Esophagus muscularis mucosa (tissue), 4 donors: ENCODE measurements at regions of chr6 and their contacts with region 1.

Region 1: GRCh38 chr6:3742426-3743344 is 8.8 kb downstream of the PXDC1 start:
- DNase-seq: peak; percentile 97
- H3K4me3 ChIP-seq: peak overlapping the region; percentile 11 to 40 (median 30)
- H3K27ac ChIP-seq: peak overlapping the region; percentile 87 to 99 (median 99)
- H3K4me1 ChIP-seq: peaks cover 78 to 100% (median 99%) of the 10 kb centered on the region in 4 donors
- H3K27me3 ChIP-seq: no peaks in the 10 kb centered on the region
- CTCF ChIP-seq: peak; percentile 92 to 99 (median 94)
- EP300 ChIP-seq: peak; percentile 42
- POLR2A ChIP-seq: no peak

Region 2: DNA sequence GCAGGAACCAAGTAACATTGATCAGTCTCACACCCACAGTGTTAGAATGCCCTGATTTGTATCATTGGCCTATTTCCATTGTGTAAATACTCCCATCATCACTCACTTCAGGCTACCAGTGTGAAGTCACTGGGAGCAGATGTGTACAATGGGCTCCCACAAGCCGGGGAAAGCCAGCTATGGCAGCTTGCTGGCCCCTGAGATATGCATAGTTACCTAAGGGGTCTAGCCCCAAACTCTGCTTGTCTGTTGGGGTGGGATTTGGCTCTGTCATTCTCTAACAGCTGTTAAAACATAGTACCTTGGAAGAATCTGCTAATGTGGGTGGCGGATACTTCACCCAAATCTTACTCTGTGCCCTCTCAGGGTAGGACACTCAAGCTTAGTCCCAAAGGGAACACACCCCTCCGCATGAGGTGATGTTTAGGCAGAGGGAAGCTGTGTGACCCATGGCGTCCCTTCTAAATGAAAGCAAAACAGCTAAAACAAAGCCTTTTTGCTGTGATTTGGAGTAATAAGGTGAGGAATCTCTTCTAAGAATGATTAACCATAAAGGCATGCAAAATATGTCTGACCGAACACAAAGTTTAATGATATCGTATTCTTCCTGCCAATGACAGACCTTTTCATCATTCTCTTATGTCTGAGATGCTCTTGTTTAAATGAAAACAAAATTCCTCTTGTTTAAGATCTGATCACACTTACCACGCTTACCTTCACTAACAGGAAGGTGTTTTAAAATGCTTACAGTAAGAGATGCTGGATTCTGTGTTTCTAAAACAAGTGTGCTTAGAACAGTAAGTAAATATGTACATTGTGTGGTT is 54.8 kb after region 1 on chr6:
- intact Hi-C with region 1: no loop called
- DNase-seq: no peak
- H3K4me3 ChIP-seq: no peak overlapping the region
- H3K27ac ChIP-seq: peak overlapping the region in 1 of 4 donors; percentile 13
- H3K4me1 ChIP-seq: peaks cover 29 to 43% (median 39%) of the 10 kb centered on the region in 4 donors
- H3K27me3 ChIP-seq: no peaks in the 10 kb centered on the region
- CTCF ChIP-seq: no peak
- EP300 ChIP-seq: no peak
- POLR2A ChIP-seq: no peak

Region 3: DNA sequence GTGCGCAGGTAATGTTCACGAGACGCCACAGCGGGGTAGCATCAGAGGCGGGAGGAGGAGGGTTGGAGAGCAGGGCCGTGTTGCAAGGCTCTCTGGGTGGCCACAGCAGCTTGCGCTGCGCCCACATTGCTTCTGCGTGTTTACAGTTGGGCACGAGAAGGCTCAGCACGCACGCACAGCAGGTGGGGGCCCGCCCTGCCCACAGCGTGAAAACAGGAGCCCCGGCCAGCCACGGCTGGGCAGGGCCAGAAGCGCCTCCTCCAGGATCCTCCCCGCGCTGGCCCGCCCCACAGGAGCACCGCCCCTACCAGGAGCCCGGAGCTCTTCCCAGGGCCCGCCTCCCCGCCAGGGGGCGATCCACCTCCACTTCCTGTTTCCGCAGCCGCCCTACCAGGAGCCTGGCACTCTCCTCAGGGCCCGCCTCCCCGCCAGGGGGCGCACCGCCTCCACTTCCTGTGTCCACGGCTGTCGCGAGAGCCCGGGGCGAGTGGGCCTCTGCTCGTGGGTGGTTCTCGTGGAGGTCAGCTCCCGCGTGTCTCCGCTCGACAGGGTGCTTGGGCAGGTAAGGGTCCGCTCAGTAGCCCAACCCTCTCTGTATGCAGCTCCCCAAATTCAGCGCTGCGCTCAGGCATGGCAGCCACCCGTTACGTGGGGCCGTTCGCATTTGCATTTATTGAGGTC is 106.4 kb after region 1 on chr6 and contains the start of gene FAM50B:
- intact Hi-C with region 1: loop called (anchors 5 kb)
- DNase-seq: peak; percentile 97
- H3K4me3 ChIP-seq: peak within 1 kb of the TSS; percentile 55 to 64 (median 56)
- H3K27ac ChIP-seq: peak within 1 kb of the TSS; percentile 70 to 83 (median 74)
- H3K4me1 ChIP-seq: peaks cover 0 to 24% (median 22%) of the 10 kb centered on the region in 4 donors
- H3K27me3 ChIP-seq: no peaks in the 10 kb centered on the region
- CTCF ChIP-seq: peak; percentile 94 to 97 (median 97)
- EP300 ChIP-seq: no peak
- POLR2A ChIP-seq: no peak
- total RNA-seq, gene FAM50B: 12.5 to 26.6 (median 17.6) TPM

Region 4: DNA sequence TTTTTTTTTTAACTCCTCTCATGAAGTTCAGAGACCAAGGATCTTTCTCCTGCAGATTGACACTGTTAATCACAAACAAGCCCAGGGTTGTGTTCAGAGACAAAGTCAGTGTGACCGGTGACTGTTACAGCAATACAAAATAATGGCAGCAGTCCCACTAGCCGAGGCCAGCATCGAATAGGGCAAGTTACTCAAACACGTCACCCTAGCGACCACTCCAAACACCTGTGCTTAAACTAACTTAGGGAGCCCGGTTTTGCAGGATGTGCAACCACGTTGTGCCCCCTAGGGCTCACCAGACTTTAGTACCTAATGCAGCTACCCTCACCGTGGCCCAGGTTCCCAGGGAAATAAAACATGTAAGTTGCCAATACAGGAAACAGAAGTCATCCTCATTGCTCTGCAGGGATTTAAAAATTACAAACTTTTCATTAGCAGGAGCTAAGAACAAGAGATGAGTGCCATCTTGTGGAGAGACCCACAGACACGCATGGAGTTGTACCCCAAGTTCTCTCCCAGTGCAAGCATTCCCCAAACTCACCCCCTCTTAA is 144.5 kb after region 1 on chr6:
- intact Hi-C with region 1: loop called (anchors 5 kb)
- DNase-seq: no peak
- H3K4me3 ChIP-seq: no peak overlapping the region
- H3K27ac ChIP-seq: no peak overlapping the region
- H3K4me1 ChIP-seq: peaks cover 23 to 50% (median 33%) of the 10 kb centered on the region in 4 donors
- H3K27me3 ChIP-seq: no peaks in the 10 kb centered on the region
- CTCF ChIP-seq: peak; percentile 46 to 59 (median 48)
- EP300 ChIP-seq: no peak
- POLR2A ChIP-seq: no peak

Region 5: GRCh38 chr6:3898265-3898994 is 155.7 kb after region 1 on chr6:
- intact Hi-C with region 1: no loop called
- DNase-seq: no peak
- H3K4me3 ChIP-seq: no peak overlapping the region
- H3K27ac ChIP-seq: no peak overlapping the region
- H3K4me1 ChIP-seq: no peaks in the 10 kb centered on the region
- H3K27me3 ChIP-seq: no peaks in the 10 kb centered on the region
- CTCF ChIP-seq: no peak
- EP300 ChIP-seq: no peak
- POLR2A ChIP-seq: no peak

Region 6: GRCh38 chr6:3929281-3929798 is 186.7 kb after region 1 on chr6:
- intact Hi-C with region 1: loop called (anchors 1 kb)
- DNase-seq: peak; percentile 92
- H3K4me3 ChIP-seq: no peak overlapping the region
- H3K27ac ChIP-seq: peak overlapping the region; percentile 63 to 78 (median 74)
- H3K4me1 ChIP-seq: peaks cover 8 to 52% (median 39%) of the 10 kb centered on the region in 4 donors
- H3K27me3 ChIP-seq: no peaks in the 10 kb centered on the region
- CTCF ChIP-seq: no peak
- EP300 ChIP-seq: no peak
- POLR2A ChIP-seq: no peak

Region 7: GRCh38 chr6:3990692-3991501 is 248.2 kb after region 1 on chr6:
- intact Hi-C with region 1: loop called (anchors 2 kb)
- DNase-seq: peak; percentile 96
- H3K4me3 ChIP-seq: peak overlapping the region; percentile 46 to 58 (median 52)
- H3K27ac ChIP-seq: peak overlapping the region; percentile 72 to 80 (median 78)
- H3K4me1 ChIP-seq: peaks cover 9 to 21% (median 18%) of the 10 kb centered on the region in 4 donors
- H3K27me3 ChIP-seq: no peaks in the 10 kb centered on the region
- CTCF ChIP-seq: peak; percentile 80 to 83 (median 81)
- EP300 ChIP-seq: no peak
- POLR2A ChIP-seq: no peak

Region 8: DNA sequence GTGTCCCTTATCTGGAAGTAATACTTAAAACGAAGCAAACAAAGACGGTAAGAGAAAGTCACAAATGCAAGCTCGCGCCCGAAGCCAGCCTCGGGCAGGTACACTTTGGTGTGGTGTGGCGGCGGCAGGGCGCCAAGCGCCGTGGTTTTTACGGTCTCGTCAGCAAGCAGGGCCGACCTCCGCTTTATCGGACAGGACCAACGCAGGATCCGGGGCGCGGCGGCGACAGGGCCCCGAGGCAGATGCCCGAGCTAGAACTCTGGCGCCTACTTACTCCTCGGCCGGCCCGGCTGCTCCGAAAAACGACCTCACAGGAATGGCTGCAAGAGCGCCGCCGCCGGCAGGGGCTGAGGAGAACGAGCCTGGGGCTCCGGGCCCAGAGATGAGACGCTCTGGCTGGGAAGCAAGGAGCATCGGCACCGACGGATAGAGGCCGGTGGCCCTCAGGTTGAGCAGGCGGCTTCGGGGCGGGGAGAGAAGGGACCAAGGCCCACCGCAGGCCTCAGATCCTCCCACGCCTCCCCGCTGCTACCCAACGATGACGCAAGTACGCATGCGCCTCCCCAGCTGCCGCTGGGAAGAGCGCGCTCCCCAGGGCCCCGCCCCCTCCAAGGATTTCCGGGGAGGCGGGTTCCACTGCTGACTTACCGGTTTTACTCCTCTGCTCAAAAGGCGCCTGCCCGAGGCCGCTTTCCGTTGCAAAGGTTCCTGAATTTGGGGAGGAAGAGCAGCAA is 275.7 kb after region 1 on chr6:
- intact Hi-C with region 1: no loop called
- DNase-seq: peak; percentile 98
- H3K4me3 ChIP-seq: peak overlapping the region; percentile 66 to 76 (median 68)
- H3K27ac ChIP-seq: peak overlapping the region; percentile 94 to 98 (median 95)
- H3K4me1 ChIP-seq: peaks cover 47 to 63% (median 59%) of the 10 kb centered on the region in 4 donors
- H3K27me3 ChIP-seq: peaks cover 0 to 3% (median 0%) of the 10 kb centered on the region in 4 donors
- CTCF ChIP-seq: peak; percentile 41 to 48 (median 43)
- EP300 ChIP-seq: no peak
- POLR2A ChIP-seq: peak; percentile 75